H1 (cell line): ENCODE measurements at regions of chr17 and their contacts with region 1.

Region 1: DNA sequence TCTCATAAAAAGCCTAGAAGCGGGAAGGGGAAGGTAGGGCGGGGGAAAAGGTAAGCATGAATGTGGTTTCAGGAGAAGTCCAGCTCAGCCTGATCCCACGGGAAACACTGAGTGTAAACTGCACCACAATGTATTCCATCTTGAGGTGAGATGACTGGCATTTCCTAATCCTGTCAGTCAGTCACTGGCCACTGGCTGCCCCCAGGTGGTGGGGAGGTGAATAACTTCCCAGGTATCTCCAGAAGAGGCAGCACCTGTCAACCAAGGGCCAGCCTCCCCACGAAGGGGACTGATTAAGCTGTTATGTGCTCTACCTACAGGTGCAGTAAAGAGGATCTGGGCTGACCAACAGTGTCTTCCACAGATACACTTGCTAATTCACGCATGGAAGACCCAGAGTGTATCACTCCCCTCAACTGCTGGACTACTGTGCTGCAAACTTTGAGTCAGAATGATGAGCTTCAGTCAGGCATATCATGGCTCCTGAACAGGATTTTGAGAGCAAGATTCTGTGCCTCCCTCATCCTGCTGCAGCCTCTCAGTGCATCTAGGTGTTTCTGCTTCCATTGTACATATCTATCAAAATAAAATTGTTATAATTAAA is 108.5 kb upstream of the CCL2 start:
- DNase-seq: peak in 1 of 2 experiments; percentile 90
- H3K4me3 ChIP-seq: no peak overlapping the region
- H3K27ac ChIP-seq: no peak overlapping the region
- H3K4me1 ChIP-seq: peaks cover 0 to 4% (median 0%) of the 10 kb centered on the region in 4 experiments; a peak in 3 of 7 replicates
- H3K27me3 ChIP-seq: no peaks in the 10 kb centered on the region
- CTCF ChIP-seq: peak; percentile 93 to 99 (median 97)
- EP300 ChIP-seq: no peak
- POLR2A ChIP-seq: no peak
- RAD21 ChIP-seq: peak; percentile 93 to 96

Region 2: GRCh38 chr17:33955461-33955860 is 191.1 kb before region 1 on chr17:
- CTCF ChIA-PET with region 1: interaction called, 19 read pairs
- POLR2A ChIA-PET with region 1: no interaction called
- DNase-seq: no peak
- H3K4me3 ChIP-seq: no peak overlapping the region
- H3K27ac ChIP-seq: no peak overlapping the region
- H3K4me1 ChIP-seq: 0 out of 7 replicates have a peak, but pooled peaks cover 0 to 2% (median 0%) of the 10 kb centered on the region in 4 experiments
- H3K27me3 ChIP-seq: no peaks in the 10 kb centered on the region
- CTCF ChIP-seq: no peak
- EP300 ChIP-seq: no peak
- POLR2A ChIP-seq: no peak
- RAD21 ChIP-seq: no peak

Region 3: DNA sequence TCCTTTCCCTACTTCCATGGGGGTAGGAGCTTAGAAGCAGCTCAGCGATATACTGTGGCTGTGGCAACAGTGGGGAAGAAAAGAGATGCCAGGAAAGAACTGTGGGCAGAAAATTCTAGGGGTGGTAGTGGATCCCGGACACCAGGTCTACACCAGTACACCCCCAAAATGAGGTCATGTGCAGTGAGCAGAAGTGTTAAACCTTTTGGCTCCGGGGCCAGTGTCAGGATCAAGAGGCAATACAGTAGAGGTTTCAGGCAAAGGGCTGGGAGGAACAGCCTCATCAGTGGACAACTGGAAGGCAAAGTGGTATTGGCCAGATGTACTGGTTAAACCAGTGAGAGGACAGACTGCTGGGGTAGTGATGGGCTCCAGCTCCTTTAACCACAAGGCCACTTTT is 54.6 kb before region 1 on chr17:
- CTCF ChIA-PET with region 1: interaction called, 18 read pairs
- POLR2A ChIA-PET with region 1: no interaction called
- DNase-seq: no peak
- H3K4me3 ChIP-seq: no peak overlapping the region
- H3K27ac ChIP-seq: no peak overlapping the region
- H3K4me1 ChIP-seq: no peaks in the 10 kb centered on the region
- H3K27me3 ChIP-seq: no peaks in the 10 kb centered on the region
- CTCF ChIP-seq: no peak
- EP300 ChIP-seq: no peak
- POLR2A ChIP-seq: no peak
- RAD21 ChIP-seq: no peak

Region 4: GRCh38 chr17:34118564-34118963 is 28.0 kb before region 1 on chr17:
- CTCF ChIA-PET with region 1: interaction called, 145 read pairs
- POLR2A ChIA-PET with region 1: no interaction called
- DNase-seq: peak in 1 of 2 experiments; percentile 17
- H3K4me3 ChIP-seq: no peak overlapping the region
- H3K27ac ChIP-seq: no peak overlapping the region
- H3K4me1 ChIP-seq: no peaks in the 10 kb centered on the region
- H3K27me3 ChIP-seq: no peaks in the 10 kb centered on the region
- CTCF ChIP-seq: no peak
- EP300 ChIP-seq: no peak
- POLR2A ChIP-seq: no peak
- RAD21 ChIP-seq: no peak

Region 5: DNA sequence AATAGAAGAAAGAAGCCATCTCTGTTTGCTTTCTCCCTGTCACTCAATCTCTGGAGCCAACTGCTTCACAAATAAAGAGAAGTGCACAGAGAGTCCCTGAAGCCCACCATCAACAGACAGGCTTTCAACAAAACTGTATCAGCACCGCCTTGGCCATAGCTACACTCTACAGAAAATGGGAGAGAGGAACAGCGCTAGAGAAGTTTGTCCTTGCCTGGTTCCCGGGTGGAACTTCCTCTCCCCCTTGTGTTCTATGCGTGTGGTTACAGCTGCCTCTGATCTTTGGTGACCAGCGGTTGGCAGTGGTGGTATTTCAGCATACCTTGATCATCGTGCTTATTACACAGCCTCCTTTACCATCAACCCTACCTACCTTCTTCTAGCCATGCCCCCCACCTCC is 17.1 kb after region 1 on chr17:
- CTCF ChIA-PET with region 1: interaction called, 78 read pairs
- POLR2A ChIA-PET with region 1: interaction called, 16 read pairs
- DNase-seq: peak in 1 of 2 experiments; percentile 52
- H3K4me3 ChIP-seq: no peak overlapping the region
- H3K27ac ChIP-seq: no peak overlapping the region
- H3K4me1 ChIP-seq: peaks cover 0 to 3% (median 0%) of the 10 kb centered on the region in 4 experiments; a peak in 1 of 7 replicates
- H3K27me3 ChIP-seq: no peaks in the 10 kb centered on the region
- CTCF ChIP-seq: peak; percentile 81 to 85 (median 83)
- EP300 ChIP-seq: no peak
- POLR2A ChIP-seq: no peak
- RAD21 ChIP-seq: peak; percentile 94